Activated CD8-positive, alpha-beta T cell treated with anti-CD3 and anti-CD28 coated beads for 36 hours (primary cell): ENCODE measurements at regions of chr13 and their contacts with region 1.

Region 1: GRCh38 chr13:42271337-42272114 is 426 bp upstream of the AKAP11 start:
- DNase-seq: peak; percentile 96
- ATAC-seq: peak; percentile 86
- H3K4me3 Mint-ChIP-seq: peak overlapping the region; percentile 99
- H3K27ac Mint-ChIP-seq: peak overlapping the region; percentile 85
- H3K4me1 Mint-ChIP-seq: peaks cover 41% of the 10 kb centered on the region
- H3K27me3 Mint-ChIP-seq: no peaks in the 10 kb centered on the region
- CTCF ChIP-seq: no peak

Region 2: GRCh38 chr13:42137856-42138537 is 133.5 kb before region 1 on chr13:
- CTCF ChIA-PET with region 1: no interaction called
- POLR2A ChIA-PET with region 1: no interaction called
- intact Hi-C with region 1: no loop called
- DNase-seq: no peak
- ATAC-seq: no peak
- H3K4me3 Mint-ChIP-seq: no peak overlapping the region
- H3K27ac Mint-ChIP-seq: no peak overlapping the region
- H3K4me1 Mint-ChIP-seq: peaks cover 29% of the 10 kb centered on the region
- H3K27me3 Mint-ChIP-seq: no peaks in the 10 kb centered on the region
- CTCF ChIP-seq: no peak

Region 3: GRCh38 chr13:42328672-42329071 is 57.1 kb after region 1 on chr13:
- CTCF ChIA-PET with region 1: interaction called, 4 read pairs
- POLR2A ChIA-PET with region 1: interaction called, 3 read pairs
- intact Hi-C with region 1: loop called (anchors 5 kb)
- DNase-seq: peak; percentile 74
- ATAC-seq: peak; percentile 86
- H3K4me3 Mint-ChIP-seq: peak overlapping the region; percentile 22
- H3K27ac Mint-ChIP-seq: peak overlapping the region; percentile 93
- H3K4me1 Mint-ChIP-seq: peaks cover 50% of the 10 kb centered on the region
- H3K27me3 Mint-ChIP-seq: no peaks in the 10 kb centered on the region
- CTCF ChIP-seq: no peak